ENCODE measurements at regions of chr1 and their contacts with region 1.

Region 1: GRCh38 chr1:198088360-198089071 is 68.3 kb upstream of the NEK7 start:
- DNase-seq: no peak
- H3K4me3 ChIP-seq: no peak overlapping the region
- H3K27ac ChIP-seq: no peak overlapping the region
- H3K4me1 ChIP-seq: peaks cover 0 to 9% (median 2%) of the 10 kb centered on the region in 4 donors
- H3K27me3 ChIP-seq: no peaks in the 10 kb centered on the region
- CTCF ChIP-seq: peak; percentile 64 to 66

Region 2: DNA sequence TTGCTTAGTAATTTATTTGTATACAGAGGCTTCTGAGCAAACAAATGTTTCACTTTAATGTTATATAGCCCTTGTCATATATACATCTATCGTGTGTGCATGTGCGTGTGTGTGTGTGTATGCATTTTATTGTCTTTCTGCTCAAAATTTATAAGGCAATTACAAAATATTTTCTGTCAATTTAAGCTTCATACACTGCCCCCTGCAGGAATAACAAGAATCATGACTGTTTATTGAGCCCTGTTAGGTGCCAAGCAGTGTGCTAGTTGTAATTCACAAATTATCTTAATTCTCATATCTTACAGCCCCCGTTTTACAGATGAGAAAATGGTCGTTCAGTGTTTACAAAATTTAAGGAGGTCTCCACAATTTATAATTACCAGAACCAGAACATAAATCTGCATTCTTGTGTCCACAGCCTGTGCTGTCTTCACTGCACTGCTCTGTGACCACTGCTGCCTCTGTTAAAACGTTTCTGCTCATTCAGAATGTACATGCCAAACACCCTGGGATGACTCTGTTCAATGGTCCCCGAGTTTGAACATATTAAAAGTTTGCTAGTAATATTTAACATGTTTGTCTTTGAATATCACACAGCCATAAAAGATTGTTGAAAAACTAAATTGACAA is 270.6 kb after region 1 on chr1:
- intact Hi-C with region 1: loop called (anchors 10 kb)
- DNase-seq: no peak
- H3K4me3 ChIP-seq: no peak overlapping the region
- H3K27ac ChIP-seq: no peak overlapping the region
- H3K4me1 ChIP-seq: no peaks in the 10 kb centered on the region
- H3K27me3 ChIP-seq: no peaks in the 10 kb centered on the region
- CTCF ChIP-seq: peak; percentile 22 to 47

Region 3: DNA sequence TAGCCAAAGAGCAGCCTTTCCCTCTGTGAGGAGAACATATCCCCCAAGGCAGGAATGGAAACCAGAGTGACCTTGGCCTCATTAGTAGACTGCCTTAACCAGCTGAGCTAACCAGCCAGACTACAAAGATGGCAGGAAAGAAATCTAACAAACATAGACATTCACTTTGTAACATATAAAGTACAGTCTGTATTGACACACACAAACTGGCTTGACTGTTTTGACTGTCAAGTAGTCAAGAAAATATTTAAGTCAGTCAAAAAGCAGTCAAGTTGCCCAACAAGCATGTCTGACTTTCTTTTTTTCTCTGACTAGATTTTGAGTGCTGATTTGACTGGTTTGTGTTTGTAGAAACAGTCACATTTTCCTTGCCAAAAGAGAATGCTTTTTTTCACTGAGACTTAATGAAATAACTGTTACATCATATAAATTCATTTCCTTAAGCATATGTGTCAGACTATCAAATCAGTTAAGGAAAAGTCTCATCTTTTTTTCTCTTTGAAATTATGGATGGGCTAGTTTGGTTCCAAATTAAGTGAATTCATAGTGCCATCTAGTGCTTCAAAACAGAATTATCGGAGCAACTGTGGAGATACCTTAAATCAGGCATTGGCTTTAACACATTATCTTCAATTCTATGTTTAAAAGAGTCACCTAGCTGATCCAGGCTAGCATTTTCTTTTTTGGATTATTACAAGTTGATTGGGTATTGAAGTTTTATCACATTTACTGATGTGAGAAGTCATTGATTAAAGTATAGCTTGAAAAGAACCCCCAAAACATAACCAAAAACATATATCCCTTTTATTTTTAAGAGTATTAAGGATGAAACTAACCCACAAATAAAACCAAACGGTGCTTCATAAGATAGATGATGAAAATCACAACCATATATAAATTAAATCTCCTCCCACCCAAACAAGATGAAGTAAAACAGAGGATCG is 377.0 kb after region 1 on chr1:
- intact Hi-C with region 1: loop called (anchors 10 kb)
- DNase-seq: no peak
- H3K4me3 ChIP-seq: no peak overlapping the region
- H3K27ac ChIP-seq: no peak overlapping the region
- H3K4me1 ChIP-seq: no peaks in the 10 kb centered on the region
- H3K27me3 ChIP-seq: peaks cover 0 to 4% of the 10 kb centered on the region in 2 donors
- CTCF ChIP-seq: peak; percentile 61 to 65